KBM-7 (cell line): ENCODE measurements at regions of chr20 and their contacts with region 1.

Region 1: GRCh38 chr20:34825530-34826362 is at the start of gene NCOA6:
- DNase-seq: peak; percentile 61

Region 2: DNA sequence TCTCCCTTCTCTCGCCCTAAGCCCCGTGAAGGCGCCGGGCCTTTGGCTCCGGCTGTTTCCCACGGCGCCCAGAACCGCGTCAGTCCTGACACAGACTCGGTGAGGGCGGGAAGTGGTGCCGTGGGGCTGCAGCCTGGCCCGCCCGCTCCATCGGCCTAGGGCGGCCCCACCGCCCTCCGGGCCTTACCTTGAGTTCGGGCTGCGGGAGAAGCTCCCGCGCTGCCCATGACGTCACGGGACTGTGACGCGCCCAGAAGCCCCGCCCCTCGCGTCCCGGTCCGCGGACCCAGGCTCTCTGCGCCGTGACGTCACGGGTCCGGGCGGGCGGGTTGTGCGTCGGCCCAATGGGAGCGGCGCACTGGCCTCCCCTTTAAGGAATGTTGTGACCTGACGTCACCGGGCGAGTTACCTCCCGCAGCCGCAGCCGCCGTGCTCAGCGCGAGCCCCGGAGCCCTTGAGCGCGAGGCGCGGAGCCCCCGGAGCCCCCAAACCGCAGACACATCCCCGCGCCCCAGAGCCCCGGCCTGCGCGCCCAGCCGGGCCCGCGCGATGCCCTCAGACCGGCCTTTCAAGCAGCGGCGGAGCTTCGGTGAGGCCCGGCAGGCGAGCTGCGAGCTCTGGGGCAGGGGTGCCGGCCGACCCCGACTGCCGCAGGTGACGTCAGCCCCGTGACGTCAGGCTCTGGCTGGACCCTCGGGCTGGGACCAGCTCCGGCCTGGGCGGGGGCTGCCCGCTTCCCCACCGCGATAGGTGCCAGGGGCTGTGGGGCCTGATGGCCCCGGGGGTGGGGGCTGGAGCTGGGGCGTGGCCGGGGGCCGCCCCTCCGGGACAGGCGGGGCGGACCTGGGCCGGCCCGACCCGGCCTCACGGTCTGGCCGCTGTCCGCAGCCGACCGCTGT is 267.2 kb before region 1 on chr20 and contains the start of gene MAP1LC3A:
- in situ Hi-C with region 1: no loop called
- DNase-seq: no peak

Region 3: GRCh38 chr20:35269055-35269781 is 443.5 kb after region 1 on chr20:
- in situ Hi-C with region 1: loop called (anchors 25 kb)
- DNase-seq: peak; percentile 69